HAP-1 (cell line): ENCODE measurements at regions of chrX and their contacts with region 1.

Region 1: GRCh38 chrX:73337366-73337765 is 109.5 kb upstream of the CDX4 start:
- DNase-seq: no peak
- H3K4me3 ChIP-seq: no peak overlapping the region
- H3K4me1 ChIP-seq: no peaks in the 10 kb centered on the region
- H3K27me3 ChIP-seq: no peaks in the 10 kb centered on the region

Region 2: DNA sequence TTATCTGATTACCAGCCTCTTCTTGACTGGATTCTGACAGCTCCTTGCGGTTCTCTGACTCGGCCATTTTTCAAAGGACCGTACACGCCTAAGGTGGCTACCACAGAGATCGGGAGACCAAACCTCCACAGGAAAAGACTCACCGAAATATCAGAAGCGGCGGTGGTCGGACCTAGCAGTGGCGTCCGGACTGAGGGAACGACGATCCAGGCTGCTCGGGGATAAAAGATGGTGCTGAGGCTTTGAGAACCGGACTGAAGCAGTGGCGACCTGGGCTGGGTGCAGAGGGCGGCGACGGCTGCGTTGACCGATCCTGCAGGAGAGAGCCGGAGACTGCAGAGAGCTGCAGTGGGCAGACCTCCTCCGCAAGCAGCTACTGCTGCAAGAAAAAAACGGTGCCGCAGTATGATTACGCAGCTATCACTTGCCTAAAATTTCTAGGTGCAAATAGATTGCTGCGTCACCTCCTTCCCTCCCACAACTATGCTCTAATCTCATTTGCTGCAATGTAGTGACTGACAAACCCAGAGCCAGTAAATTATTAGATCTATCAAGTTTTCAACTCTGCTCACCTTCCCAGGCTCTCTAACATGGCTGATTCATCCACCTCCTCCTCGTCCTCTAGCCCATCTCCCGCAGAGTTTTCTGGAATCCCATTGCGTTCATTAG is 122.8 kb before region 1 on chrX and contains the start of gene NAP1L2:
- in situ Hi-C with region 1: no loop called
- DNase-seq: peak; percentile 51 to 56
- H3K4me3 ChIP-seq: peak within 1 kb of the TSS; percentile 42
- H3K4me1 ChIP-seq: no peaks in the 10 kb centered on the region
- H3K27me3 ChIP-seq: peaks cover 3% of the 10 kb centered on the region; the same call in 1 of the 2 replicates

Region 3: DNA sequence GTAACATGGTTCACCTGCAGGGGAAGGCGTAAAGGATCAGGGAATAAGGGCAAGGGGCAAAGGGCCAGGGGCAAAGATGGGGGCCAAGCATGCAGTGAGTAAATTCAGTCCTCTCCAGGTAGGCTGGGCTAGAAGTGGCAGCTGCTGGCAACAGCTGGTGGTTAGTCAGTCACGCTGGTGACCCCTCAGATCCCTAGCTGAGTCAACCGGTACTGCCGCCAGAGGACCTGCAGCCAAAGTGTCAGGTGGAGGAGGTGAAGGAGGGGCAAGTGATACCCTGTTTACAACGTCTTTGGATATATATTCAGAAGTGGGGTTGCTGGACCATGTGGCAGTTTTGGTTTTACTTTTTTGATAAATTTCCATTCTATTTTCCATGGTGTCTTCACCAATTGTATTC is 98.1 kb before region 1 on chrX:
- in situ Hi-C with region 1: loop called (anchors 25 kb)
- DNase-seq: no peak
- H3K4me3 ChIP-seq: no peak overlapping the region
- H3K4me1 ChIP-seq: no peaks in the 10 kb centered on the region
- H3K27me3 ChIP-seq: no peaks in the 10 kb centered on the region

Region 4: GRCh38 chrX:73863268-73863667 is 525.9 kb after region 1 on chrX:
- in situ Hi-C with region 1: no loop called
- DNase-seq: no peak
- H3K4me3 ChIP-seq: no peak overlapping the region
- H3K4me1 ChIP-seq: no peaks in the 10 kb centered on the region
- H3K27me3 ChIP-seq: no peaks in the 10 kb centered on the region